ENCODE measurements at regions of chrX and their contacts with region 1.

Region 1: GRCh38 chrX:68828740-68829552 is at the start of gene EFNB1:
- DNase-seq: peak; percentile 89 to 92
- H3K4me3 ChIP-seq: peak within 1 kb of the TSS; percentile 70
- H3K4me3 Mint-ChIP-seq: peak within 1 kb of the TSS; percentile 83
- H3K27ac Mint-ChIP-seq: no peak within 1 kb of the TSS
- H3K4me1 ChIP-seq: no peaks in the 10 kb centered on the region
- H3K4me1 Mint-ChIP-seq: no peaks in the 10 kb centered on the region
- H3K27me3 ChIP-seq: no peaks in the 10 kb centered on the region
- H3K27me3 Mint-ChIP-seq: no peaks in the 10 kb centered on the region
- CTCF ChIP-seq: no peak
- total RNA-seq, gene EFNB1: 5.7 and 7.0 TPM in 2 replicates

Region 2: GRCh38 chrX:68868902-68869800 is 40.2 kb after region 1 on chrX:
- CTCF ChIA-PET with region 1: interaction called, 10 read pairs
- POLR2A ChIA-PET with region 1: interaction called, 4 read pairs
- intact Hi-C with region 1: no loop called
- DNase-seq: peak; percentile 21 to 49
- H3K4me3 ChIP-seq: no peak overlapping the region
- H3K4me3 Mint-ChIP-seq: no peak overlapping the region
- H3K27ac Mint-ChIP-seq: no peak overlapping the region
- H3K4me1 ChIP-seq: peaks cover 14% of the 10 kb centered on the region
- H3K4me1 Mint-ChIP-seq: peaks cover 12% of the 10 kb centered on the region
- H3K27me3 ChIP-seq: no peaks in the 10 kb centered on the region
- H3K27me3 Mint-ChIP-seq: no peaks in the 10 kb centered on the region
- CTCF ChIP-seq: no peak

Region 3: DNA sequence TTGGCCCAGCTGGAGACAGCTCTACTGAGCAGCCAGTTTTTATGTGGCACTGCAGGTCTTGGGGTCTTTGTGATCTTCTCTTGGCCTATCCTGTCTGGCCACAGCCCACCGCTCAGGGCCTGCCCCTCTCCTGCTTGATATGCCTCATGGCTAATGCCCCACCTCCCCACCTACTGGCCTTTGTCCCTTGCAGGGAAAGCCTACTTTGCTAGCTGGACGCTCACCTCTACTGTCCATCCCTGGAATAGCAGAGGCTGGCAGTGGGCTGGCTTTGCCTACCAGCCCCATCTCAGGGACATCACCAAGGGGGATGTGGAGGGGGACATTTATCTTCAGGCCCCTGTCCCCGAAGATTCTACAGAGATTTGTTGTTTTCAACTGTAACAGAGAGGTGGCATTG is 202.3 kb after region 1 on chrX:
- CTCF ChIA-PET with region 1: interaction called, 3 read pairs
- POLR2A ChIA-PET with region 1: no interaction called
- intact Hi-C with region 1: loop called (anchors 1 kb)
- DNase-seq: peak; percentile 24 to 37
- H3K4me3 ChIP-seq: no peak overlapping the region
- H3K4me3 Mint-ChIP-seq: no peak overlapping the region
- H3K27ac Mint-ChIP-seq: no peak overlapping the region
- H3K4me1 ChIP-seq: peaks cover 5% of the 10 kb centered on the region; the same call in 1 of the 2 replicates
- H3K4me1 Mint-ChIP-seq: no peaks in the 10 kb centered on the region
- H3K27me3 ChIP-seq: no peaks in the 10 kb centered on the region
- H3K27me3 Mint-ChIP-seq: no peaks in the 10 kb centered on the region
- CTCF ChIP-seq: peak in 1 of 2 experiments; percentile 50

Region 4: GRCh38 chrX:69158166-69158980 is 329.4 kb after region 1 on chrX:
- CTCF ChIA-PET with region 1: interaction called, 3 read pairs
- POLR2A ChIA-PET with region 1: no interaction called
- intact Hi-C with region 1: loop called (anchors 5 kb)
- DNase-seq: peak; percentile 38 to 47
- H3K4me3 ChIP-seq: no peak overlapping the region
- H3K4me3 Mint-ChIP-seq: no peak overlapping the region
- H3K27ac Mint-ChIP-seq: no peak overlapping the region
- H3K4me1 ChIP-seq: no peaks in the 10 kb centered on the region
- H3K4me1 Mint-ChIP-seq: no peaks in the 10 kb centered on the region
- H3K27me3 ChIP-seq: no peaks in the 10 kb centered on the region
- H3K27me3 Mint-ChIP-seq: no peaks in the 10 kb centered on the region
- CTCF ChIP-seq: peak; percentile 40 to 61

Region 5: DNA sequence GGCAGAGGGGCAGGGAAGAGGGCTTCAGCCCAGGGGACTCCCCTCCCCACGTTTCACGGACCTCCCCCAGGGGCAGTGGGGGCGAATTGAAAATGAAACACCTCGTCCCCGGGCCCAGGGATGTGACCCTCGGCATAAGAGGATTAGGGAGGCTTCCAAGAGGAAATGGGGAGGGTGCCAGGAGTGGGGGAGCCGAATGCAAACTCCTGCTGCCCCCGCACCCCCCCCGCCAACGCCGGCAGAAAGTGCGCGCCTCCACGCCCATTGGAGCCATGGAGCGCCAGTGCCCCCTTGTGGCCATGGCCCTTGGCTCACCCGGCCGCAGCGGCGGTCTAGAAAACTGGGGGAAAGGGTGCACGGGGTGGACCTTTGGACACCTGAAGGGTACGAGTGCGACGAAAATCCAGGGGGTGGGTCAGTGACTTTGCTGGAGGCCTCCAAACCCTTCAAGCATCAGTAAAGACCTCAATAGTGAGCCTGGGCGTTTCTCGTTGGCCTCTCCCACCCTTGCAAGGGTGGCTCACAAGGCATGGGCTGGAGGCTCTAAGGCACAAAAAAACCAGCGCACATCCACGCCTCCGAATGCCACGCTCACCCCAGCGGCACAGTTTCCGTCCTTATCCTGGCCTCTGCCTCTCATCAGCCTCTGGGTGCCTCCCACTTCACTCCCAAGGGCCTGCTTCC is 457.1 kb after region 1 on chrX:
- CTCF ChIA-PET with region 1: interaction called, 8 read pairs
- POLR2A ChIA-PET with region 1: no interaction called
- intact Hi-C with region 1: loop called (anchors 1 kb)
- DNase-seq: peak; percentile 37 to 62
- H3K4me3 ChIP-seq: peak overlapping the region; percentile 8; the same call in 1 of the 2 replicates
- H3K4me3 Mint-ChIP-seq: peak overlapping the region; percentile 51
- H3K27ac Mint-ChIP-seq: no peak overlapping the region
- H3K4me1 ChIP-seq: no peaks in the 10 kb centered on the region
- H3K4me1 Mint-ChIP-seq: no peaks in the 10 kb centered on the region
- H3K27me3 ChIP-seq: no peaks in the 10 kb centered on the region
- H3K27me3 Mint-ChIP-seq: no peaks in the 10 kb centered on the region
- CTCF ChIP-seq: peak; percentile 67 to 68